ENCODE measurements at regions of chr6 and their contacts with region 1.

Region 1: GRCh38 chr6:14498748-14499147 is 381.2 kb downstream of the CD83 start:
- DNase-seq: no peak
- ATAC-seq: no peak
- H3K4me3 Mint-ChIP-seq: no peak overlapping the region
- H3K27ac Mint-ChIP-seq: no peak overlapping the region
- H3K4me1 Mint-ChIP-seq: peaks cover 7% of the 10 kb centered on the region; the same call in 1 of the 2 replicates
- H3K27me3 Mint-ChIP-seq: no peaks in the 10 kb centered on the region
- CTCF ChIP-seq: no peak

Region 2: GRCh38 chr6:14518515-14519217 is 19.9 kb after region 1 on chr6:
- CTCF ChIA-PET with region 1: no interaction called
- POLR2A ChIA-PET with region 1: interaction called, 18 read pairs
- DNase-seq: no peak
- ATAC-seq: no peak
- H3K4me3 Mint-ChIP-seq: no peak overlapping the region
- H3K27ac Mint-ChIP-seq: no peak overlapping the region
- H3K4me1 Mint-ChIP-seq: peaks cover 13% of the 10 kb centered on the region
- H3K27me3 Mint-ChIP-seq: no peaks in the 10 kb centered on the region
- CTCF ChIP-seq: no peak

Region 3: DNA sequence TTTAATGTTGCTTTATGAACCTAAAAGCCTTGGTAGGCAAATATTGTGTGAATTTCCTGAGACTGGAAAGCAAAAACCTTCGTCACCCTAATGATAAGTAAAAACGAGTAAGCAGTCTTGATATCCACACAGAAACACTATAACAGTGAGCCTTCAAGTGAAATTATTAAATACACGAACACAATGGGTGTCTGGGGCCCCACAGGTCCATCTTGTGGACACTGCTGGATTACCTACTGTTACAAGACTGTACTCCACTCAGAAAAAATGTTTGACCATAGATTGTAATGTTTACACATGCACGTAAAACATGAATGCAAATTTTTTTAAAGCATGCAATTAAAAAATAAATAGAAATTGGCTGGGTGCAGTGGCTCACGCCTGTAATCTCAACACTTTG is 85.7 kb after region 1 on chr6:
- CTCF ChIA-PET with region 1: no interaction called
- POLR2A ChIA-PET with region 1: no interaction called
- DNase-seq: no peak
- ATAC-seq: no peak
- H3K4me3 Mint-ChIP-seq: no peak overlapping the region
- H3K27ac Mint-ChIP-seq: no peak overlapping the region
- H3K4me1 Mint-ChIP-seq: no peaks in the 10 kb centered on the region
- H3K27me3 Mint-ChIP-seq: no peaks in the 10 kb centered on the region
- CTCF ChIP-seq: no peak

Measured in WTC11 (cell line).